Activated CD4-positive, alpha-beta T cell treated with anti-CD3 and anti-CD28 coated beads for 36 hours (primary cell): ENCODE measurements at regions of chr5 and their contacts with region 1.

Region 1: DNA sequence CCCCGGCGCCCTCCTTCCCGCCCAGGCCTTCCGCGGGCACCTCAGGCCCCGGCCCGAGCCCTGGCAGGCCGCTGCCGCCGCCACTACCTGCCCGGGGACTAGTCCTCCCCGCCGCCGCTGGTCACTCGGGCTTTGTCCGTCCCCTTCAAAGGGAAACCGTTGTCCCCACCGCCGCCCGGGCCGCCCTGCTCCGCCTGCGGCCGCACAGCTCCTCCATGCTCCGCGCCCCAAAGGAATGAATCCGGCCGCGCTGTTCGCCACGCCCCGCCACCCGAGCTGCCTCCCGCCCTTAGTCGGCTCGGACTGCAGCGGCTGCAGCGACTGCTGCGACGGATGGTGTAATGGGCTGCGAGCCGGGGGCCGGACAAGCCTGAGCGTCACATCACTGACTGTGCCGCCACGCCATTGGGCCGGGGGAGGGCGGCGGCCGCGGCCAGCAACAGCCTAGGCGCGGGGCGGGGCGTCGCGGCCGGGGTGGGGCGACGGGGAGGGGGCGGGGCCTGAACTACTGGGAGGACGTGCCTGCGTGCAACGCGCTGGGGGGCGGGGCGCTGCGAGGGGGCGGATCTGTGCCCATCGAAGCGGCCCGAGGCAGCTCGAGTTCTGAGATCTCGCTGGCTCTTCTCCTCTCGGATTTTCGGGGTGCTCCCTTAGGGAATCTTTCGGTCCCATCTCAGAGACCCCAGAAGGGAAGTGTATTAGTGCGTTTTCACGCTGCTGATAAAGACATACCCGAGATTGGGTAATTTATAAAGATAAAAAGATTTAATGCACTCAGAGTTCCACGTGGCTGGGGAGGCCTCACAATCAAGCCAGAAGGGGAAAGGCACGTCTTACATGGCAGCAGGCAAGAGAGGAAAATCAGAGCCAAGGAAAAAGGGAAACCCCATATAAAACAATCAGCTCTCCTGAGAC is at the start of gene FEM1C:
- DNase-seq: peak; percentile 100
- ATAC-seq: peak; percentile 93
- H3K4me3 Mint-ChIP-seq: peak within 1 kb of the TSS; percentile 96
- H3K27ac Mint-ChIP-seq: peak within 1 kb of the TSS; percentile 97
- H3K4me1 Mint-ChIP-seq: peaks cover 41% of the 10 kb centered on the region
- H3K27me3 Mint-ChIP-seq: no peaks in the 10 kb centered on the region
- total RNA-seq, gene FEM1C: 15.8 to 15.9 TPM

Region 2: DNA sequence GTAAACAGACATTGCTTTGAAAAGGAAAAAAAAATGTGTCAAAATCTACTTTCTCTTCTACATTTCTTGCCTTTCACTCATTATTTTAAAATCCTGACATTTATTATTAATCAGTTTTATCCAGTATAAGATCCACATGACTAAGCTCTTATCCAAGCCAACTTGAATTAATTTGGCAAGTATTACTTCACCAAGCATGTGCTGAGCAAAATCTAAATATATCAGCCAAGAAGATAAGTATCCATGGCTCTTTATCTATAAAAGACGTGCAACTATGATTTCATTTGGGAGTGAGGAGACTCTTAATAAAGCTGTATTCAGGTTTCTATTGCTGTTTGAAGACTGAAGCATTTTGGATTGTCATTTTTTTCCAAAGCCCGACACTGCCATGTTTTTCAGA is 596.3 kb before region 1 on chr5:
- CTCF ChIA-PET with region 1: no interaction called
- POLR2A ChIA-PET with region 1: no interaction called
- intact Hi-C with region 1: no loop called
- DNase-seq: no peak
- ATAC-seq: no peak
- H3K4me3 Mint-ChIP-seq: no peak overlapping the region
- H3K27ac Mint-ChIP-seq: no peak overlapping the region
- H3K4me1 Mint-ChIP-seq: no peaks in the 10 kb centered on the region
- H3K27me3 Mint-ChIP-seq: no peaks in the 10 kb centered on the region

Region 3: GRCh38 chr5:115601701-115602590 is 57.3 kb after region 1 on chr5 and contains the start of gene TICAM2:
- CTCF ChIA-PET with region 1: interaction called, 3 read pairs
- POLR2A ChIA-PET with region 1: no interaction called
- intact Hi-C with region 1: loop called in 1 of 2 experiments (anchors 1 kb)
- DNase-seq: peak; percentile 81
- ATAC-seq: peak; percentile 91
- H3K4me3 Mint-ChIP-seq: peak within 1 kb of the TSS; percentile 61
- H3K27ac Mint-ChIP-seq: peak within 1 kb of the TSS; percentile 86
- H3K4me1 Mint-ChIP-seq: peaks cover 37% of the 10 kb centered on the region
- H3K27me3 Mint-ChIP-seq: no peaks in the 10 kb centered on the region
- total RNA-seq, gene TICAM2: 0.87 to 1.7 TPM

Region 4: DNA sequence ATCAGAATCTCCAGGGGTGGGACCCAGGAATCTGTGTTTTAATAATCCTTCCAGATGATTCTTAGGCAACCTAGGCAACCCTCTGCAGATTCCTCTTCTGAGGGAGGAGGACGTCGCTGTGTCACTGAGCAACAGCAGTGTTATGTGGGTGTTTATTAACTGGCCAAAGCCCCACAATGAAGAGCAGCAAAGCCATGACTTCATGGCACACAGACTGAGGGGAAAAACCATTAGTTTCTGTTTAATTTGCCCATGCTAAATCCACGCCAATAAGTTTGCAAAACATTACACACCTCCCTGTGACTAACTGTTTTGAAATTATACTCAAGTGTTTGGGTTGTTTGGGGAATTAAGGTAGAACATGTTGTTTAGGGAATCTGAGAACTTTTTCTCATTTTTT is 164.9 kb after region 1 on chr5:
- CTCF ChIA-PET with region 1: no interaction called
- POLR2A ChIA-PET with region 1: no interaction called
- intact Hi-C with region 1: no loop called
- DNase-seq: no peak
- ATAC-seq: no peak
- H3K4me3 Mint-ChIP-seq: no peak overlapping the region
- H3K27ac Mint-ChIP-seq: no peak overlapping the region
- H3K4me1 Mint-ChIP-seq: no peaks in the 10 kb centered on the region
- H3K27me3 Mint-ChIP-seq: peaks cover 26% of the 10 kb centered on the region

Region 5: GRCh38 chr5:116084871-116085715 is 540.4 kb after region 1 on chr5 and contains the start of gene COMMD10:
- CTCF ChIA-PET with region 1: no interaction called
- POLR2A ChIA-PET with region 1: no interaction called
- intact Hi-C with region 1: loop called in 1 of 2 experiments (anchors 1 kb)
- DNase-seq: peak; percentile 86
- ATAC-seq: peak; percentile 87
- H3K4me3 Mint-ChIP-seq: peak within 1 kb of the TSS; percentile 88
- H3K27ac Mint-ChIP-seq: peak within 1 kb of the TSS; percentile 94
- H3K4me1 Mint-ChIP-seq: peaks cover 50% of the 10 kb centered on the region
- H3K27me3 Mint-ChIP-seq: no peaks in the 10 kb centered on the region
- total RNA-seq, gene COMMD10: 19.7 to 23.0 TPM